ENCODE measurements at regions of chr7 and their contacts with region 1.

Region 1: DNA sequence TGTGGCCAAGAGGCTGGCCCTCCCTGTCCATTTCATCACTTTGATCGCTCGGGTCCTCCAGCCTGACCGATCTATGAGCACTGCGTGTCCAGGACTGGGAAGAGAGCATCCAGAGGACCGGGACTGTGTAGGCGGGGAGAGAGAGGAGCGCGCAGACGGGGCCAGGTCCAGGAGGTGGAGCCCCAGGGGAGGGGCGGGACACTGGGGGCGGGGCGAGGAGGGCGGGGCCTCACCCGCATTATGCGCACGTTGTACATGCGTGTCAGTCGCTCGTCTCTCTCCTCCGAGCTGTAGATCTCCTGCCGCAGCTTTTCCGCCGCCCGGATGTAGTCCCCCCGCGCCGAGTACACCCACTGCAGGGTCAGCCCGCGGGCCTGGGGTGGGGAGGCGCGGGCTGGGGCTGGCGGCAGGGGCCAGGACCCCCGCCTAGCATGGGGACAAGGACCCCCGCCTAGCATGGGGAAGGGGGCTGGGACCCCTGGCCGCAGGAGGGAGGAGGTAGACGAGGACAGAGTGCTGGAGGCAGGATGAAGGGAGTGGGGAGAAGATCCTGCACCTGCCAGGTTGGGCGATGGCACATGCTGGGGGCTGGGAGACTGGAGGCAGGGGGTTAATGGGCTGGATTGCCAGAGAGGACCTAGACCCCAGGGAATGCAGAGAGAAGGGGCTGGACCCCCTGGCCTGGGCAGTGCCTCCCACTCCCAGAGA is 14.3 kb downstream of the MOSPD3 start:
- DNase-seq: peak; percentile 91
- H3K4me3 Mint-ChIP-seq: peak overlapping the region; percentile 66
- H3K27ac Mint-ChIP-seq: peak overlapping the region; percentile 24
- H3K4me1 Mint-ChIP-seq: peaks cover 24% of the 10 kb centered on the region
- H3K27me3 Mint-ChIP-seq: no peaks in the 10 kb centered on the region

Region 2: GRCh38 chr7:99772565-99772964 is 854.1 kb before region 1 on chr7:
- CTCF ChIA-PET with region 1: no interaction called
- intact Hi-C with region 1: no loop called
- DNase-seq: no peak
- H3K4me3 Mint-ChIP-seq: no peak overlapping the region
- H3K27ac Mint-ChIP-seq: no peak overlapping the region
- H3K4me1 Mint-ChIP-seq: peaks cover 10% of the 10 kb centered on the region
- H3K27me3 Mint-ChIP-seq: peaks cover 70% of the 10 kb centered on the region

Region 3: DNA sequence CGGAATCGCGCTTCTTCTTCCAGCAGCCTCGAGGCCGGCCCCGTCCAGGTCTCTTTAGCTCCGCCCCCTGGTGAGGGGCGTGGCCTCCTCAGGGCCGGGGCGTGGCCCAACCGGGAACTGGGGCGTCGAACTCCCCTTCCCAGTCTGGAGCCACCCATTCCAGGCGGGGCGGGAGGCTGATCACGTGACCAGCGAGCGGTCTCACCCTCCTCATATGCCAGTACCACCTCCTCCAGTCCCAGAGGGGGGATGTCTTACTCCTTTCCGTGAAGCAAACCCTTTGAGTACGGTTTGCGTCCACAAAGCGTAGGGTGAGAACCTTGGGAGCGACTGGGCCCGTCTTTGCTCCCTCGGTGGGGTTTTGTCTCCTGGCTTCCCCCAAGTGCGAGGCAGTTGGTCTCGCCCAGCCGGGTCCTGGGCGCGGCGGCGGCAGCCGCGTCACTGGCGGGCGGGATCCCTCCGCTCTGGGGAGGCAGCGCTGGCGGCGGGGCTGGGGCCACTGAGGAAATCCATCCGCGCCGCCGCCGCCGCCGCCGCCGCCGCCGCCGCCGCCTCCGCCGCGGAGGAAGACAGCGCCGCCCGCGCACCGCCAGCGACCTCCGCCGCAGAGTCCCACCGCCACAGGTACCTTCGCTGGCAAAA is 46.7 kb after region 1 on chr7 and contains the start of gene GNB2:
- CTCF ChIA-PET with region 1: interaction called, 4 read pairs
- intact Hi-C with region 1: loop called (anchors 5 kb)
- DNase-seq: peak; percentile 100
- H3K4me3 Mint-ChIP-seq: peak within 1 kb of the TSS; percentile 97
- H3K27ac Mint-ChIP-seq: peak within 1 kb of the TSS; percentile 95
- H3K4me1 Mint-ChIP-seq: peaks cover 17% of the 10 kb centered on the region
- H3K27me3 Mint-ChIP-seq: no peaks in the 10 kb centered on the region
- total RNA-seq, gene GNB2: 221 TPM